ENCODE measurements at regions of chr19 and their contacts with region 1.

Region 1: DNA sequence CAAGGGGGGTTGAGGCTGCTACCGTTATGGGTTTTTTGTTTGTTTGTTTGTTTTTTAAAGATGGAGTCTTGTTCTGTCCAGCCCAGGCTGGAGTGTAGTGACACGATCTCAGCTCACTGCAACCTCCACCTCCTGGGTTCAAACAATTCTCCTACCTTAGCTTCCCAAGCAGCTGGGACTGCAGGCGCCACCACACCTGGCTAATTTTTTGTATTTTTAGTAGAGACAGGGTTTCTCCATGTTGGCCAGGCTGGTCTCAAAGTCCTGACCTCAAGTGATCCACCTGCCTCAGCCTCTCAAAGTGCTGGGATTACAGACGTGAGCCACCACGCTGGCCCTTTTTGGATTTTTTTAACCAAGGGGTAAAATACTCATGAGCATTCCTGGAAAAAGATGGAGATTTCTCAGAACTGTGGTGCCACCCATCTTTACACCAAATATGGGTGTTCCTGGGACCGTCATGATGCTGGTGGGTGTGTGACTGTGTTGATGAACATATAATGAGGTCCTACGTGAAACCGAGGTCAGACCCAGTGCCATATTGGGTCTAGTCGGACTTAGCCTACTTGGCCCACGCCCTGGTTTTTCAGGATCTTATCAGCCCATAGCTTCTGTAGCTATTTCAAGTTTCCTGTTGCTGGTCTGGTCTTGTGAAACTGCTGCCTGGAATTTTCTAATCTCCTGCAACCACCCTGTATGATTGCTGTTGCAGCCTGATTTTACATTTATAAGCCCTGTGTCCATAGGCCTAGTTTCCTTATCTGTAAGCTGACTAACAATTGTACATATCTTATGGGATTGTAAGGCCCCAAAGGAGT is 6.2 kb downstream of the PPP1R15A start:
- DNase-seq: no peak
- ATAC-seq: no peak
- H3K4me3 ChIP-seq: no peak overlapping the region
- H3K27ac ChIP-seq: no peak overlapping the region
- H3K4me1 ChIP-seq: peaks cover 14% of the 10 kb centered on the region
- H3K27me3 ChIP-seq: no peaks in the 10 kb centered on the region
- CTCF ChIP-seq: no peak

Region 2: DNA sequence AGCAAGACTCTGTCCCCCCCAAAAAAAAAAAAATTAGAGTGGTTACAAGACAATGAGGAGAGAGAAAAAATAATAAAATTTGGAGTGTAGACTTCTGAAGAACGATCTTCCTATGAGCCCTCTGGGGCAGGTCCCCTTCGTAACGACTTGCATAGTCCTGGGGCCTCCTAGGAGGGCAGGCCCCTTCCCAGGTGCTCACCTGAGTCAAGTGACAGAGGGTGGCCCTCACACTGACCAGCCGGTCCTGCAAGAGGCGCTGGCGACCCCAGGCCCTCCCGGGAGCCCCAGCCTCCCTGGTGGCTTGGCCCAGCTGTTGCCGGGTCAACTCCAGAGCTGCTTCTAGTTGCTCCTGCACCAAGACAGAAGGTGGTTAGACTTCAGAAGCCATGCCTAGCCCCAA is 24.9 kb before region 1 on chr19:
- CTCF ChIA-PET with region 1: no interaction called
- POLR2A ChIA-PET with region 1: no interaction called
- intact Hi-C with region 1: no loop called
- DNase-seq: no peak
- ATAC-seq: no peak
- H3K4me3 ChIP-seq: no peak overlapping the region
- H3K27ac ChIP-seq: no peak overlapping the region
- H3K4me1 ChIP-seq: no peaks in the 10 kb centered on the region
- H3K27me3 ChIP-seq: no peaks in the 10 kb centered on the region
- CTCF ChIP-seq: no peak

Region 3: GRCh38 chr19:48868114-48868886 is 10.1 kb before region 1 on chr19 and contains the start of gene PLEKHA4:
- CTCF ChIA-PET with region 1: no interaction called
- POLR2A ChIA-PET with region 1: no interaction called
- intact Hi-C with region 1: no loop called
- DNase-seq: no peak
- ATAC-seq: no peak
- H3K4me3 ChIP-seq: no peak within 1 kb of the TSS
- H3K27ac ChIP-seq: no peak within 1 kb of the TSS
- H3K4me1 ChIP-seq: no peaks in the 10 kb centered on the region; the same call in 1 of the 2 replicates
- H3K27me3 ChIP-seq: no peaks in the 10 kb centered on the region
- CTCF ChIP-seq: no peak
- total RNA-seq, gene PLEKHA4: 0.63 and 1.2 TPM in 2 replicates

Region 4: DNA sequence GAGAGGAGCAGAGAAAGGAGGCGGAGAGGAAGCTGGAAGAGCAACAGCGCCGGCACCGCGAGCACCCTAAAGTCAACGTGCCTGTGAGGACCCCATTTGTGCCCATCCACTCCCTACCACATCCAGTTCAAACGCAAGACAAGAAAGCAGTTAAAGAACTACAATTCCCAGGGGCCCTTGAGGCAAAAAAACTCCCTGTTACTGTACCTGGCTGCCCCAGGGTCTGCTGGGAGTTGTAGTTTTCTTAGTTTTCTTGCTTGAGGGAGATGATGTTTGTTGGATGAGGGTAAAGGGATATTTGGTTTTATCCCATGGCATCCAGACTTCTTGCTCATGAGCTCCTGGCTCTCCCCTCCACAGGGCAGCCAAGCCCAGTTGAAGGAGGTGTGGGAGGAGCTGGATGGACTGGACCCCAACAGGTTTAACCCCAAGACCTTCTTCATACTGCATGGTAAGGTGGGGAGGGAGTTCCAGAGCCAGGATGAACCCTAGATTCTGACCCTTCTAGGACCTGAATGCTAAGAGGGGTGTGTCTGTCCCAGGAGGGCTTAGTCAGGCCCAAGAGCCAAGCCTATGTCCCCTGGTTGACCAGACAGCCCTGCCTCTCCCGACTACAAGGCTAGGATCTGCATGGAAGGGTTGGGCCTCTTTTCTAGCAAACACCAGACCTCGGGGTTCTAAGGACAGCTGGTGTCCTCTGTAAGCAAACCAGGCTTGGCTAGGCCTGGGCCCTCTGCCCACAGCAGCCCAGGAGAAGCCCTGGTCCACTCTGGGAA is 34.9 kb after region 1 on chr19:
- CTCF ChIA-PET with region 1: no interaction called
- POLR2A ChIA-PET with region 1: no interaction called
- intact Hi-C with region 1: no loop called
- DNase-seq: peak; percentile 8
- ATAC-seq: no peak
- H3K4me3 ChIP-seq: no peak overlapping the region
- H3K27ac ChIP-seq: no peak overlapping the region
- H3K4me1 ChIP-seq: no peaks in the 10 kb centered on the region
- H3K27me3 ChIP-seq: no peaks in the 10 kb centered on the region
- CTCF ChIP-seq: no peak

Region 5: GRCh38 chr19:48962029-48962848 is 83.8 kb after region 1 on chr19:
- CTCF ChIA-PET with region 1: no interaction called
- POLR2A ChIA-PET with region 1: interaction called, 22 read pairs
- intact Hi-C with region 1: no loop called
- DNase-seq: peak; percentile 18
- ATAC-seq: peak; percentile 50
- H3K4me3 ChIP-seq: no peak overlapping the region
- H3K27ac ChIP-seq: 0 out of 2 replicates have a peak overlapping the region, but pooled peaks have one; percentile 23
- H3K4me1 ChIP-seq: peaks cover 31% of the 10 kb centered on the region
- H3K27me3 ChIP-seq: no peaks in the 10 kb centered on the region
- CTCF ChIP-seq: no peak